ENCODE measurements at regions of chr12 and their contacts with region 1.

Region 1: DNA sequence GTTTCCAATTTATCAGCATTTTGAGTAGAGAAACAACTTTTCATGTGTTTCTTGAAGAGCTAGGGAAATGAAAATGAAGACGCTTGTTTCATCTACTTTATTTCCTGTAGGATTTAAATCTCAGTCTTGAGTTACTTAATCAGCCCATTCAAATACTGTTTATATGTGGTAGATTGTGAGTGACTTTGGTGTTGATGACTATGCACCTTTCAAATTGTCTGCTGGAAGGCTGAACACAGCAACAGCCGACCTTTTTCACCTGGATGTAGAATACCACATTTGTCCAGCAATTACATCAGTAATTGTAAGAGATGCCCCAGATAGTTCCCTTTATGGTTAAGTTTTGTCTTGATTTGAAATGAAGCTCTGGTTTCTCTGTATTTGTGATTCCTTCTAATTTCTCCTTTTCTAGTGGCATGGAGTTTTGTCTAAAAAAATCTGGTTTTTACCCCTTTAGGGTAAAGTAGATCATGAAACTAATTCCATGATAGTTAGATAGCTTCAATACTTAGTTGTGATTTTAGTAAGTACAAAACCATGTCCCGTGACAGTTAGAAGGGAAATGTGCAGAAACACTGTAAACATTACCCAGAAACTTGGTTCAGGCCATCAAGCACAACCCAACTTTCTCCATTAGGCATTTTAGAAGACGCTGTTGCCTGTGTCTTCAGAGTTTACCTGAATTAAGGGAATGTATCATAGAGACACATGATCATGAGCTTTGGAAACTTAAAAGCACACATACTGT is 165.0 kb downstream of the SRGAP1 start:
- DNase-seq: no peak
- ATAC-seq: no peak
- H3K4me3 ChIP-seq: no peak overlapping the region
- H3K27ac ChIP-seq: no peak overlapping the region
- H3K4me1 ChIP-seq: no peaks in the 10 kb centered on the region
- H3K27me3 ChIP-seq: no peaks in the 10 kb centered on the region
- CTCF ChIP-seq: no peak
- POLR2A ChIP-seq: no peak

Region 2: GRCh38 chr12:64042911-64043310 is 33.4 kb after region 1 on chr12:
- in situ Hi-C with region 1: no loop called
- intact Hi-C with region 1: loop called (anchors 1 kb)
- DNase-seq: no peak
- ATAC-seq: no peak
- H3K4me3 ChIP-seq: no peak overlapping the region
- H3K27ac ChIP-seq: no peak overlapping the region
- H3K4me1 ChIP-seq: peaks cover 0 to 7% of the 10 kb centered on the region in 2 donors
- H3K27me3 ChIP-seq: no peaks in the 10 kb centered on the region
- CTCF ChIP-seq: no peak
- POLR2A ChIP-seq: no peak

Region 3: DNA sequence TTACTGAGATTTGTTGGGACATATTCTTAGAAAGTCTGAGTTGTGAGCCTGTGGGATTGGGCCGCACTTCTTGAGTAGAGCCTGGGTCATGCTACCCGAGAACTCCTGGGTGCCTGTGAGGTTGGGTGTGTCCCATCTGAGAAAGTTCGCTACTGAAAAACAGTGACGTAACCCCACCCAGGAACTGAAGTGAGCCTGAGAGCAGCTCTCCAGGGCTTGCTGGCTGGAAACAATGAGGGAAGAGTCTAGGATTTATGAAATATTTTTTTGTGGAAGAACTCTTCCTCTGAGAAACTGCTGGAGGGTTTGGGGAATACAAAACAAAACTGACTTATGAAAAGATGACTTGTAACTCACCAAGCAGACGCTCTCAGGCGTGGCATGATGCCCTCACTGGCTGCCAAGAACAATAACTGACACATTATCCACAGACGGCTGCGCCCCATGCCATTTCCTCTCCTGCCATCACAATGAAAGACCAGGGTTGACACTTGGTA is 670.0 kb after region 1 on chr12:
- in situ Hi-C with region 1: no loop called
- intact Hi-C with region 1: no loop called
- DNase-seq: peak; percentile 25 to 36
- ATAC-seq: peak; percentile 73 to 78
- H3K4me3 ChIP-seq: peak overlapping the region in 3 of 4 donors; percentile 2 to 28 (median 18)
- H3K27ac ChIP-seq: peak overlapping the region; percentile 4 to 15 (median 8)
- H3K4me1 ChIP-seq: peaks cover 6 to 23% of the 10 kb centered on the region in 2 donors
- H3K27me3 ChIP-seq: no peaks in the 10 kb centered on the region
- CTCF ChIP-seq: no peak
- POLR2A ChIP-seq: no peak

Region 4: DNA sequence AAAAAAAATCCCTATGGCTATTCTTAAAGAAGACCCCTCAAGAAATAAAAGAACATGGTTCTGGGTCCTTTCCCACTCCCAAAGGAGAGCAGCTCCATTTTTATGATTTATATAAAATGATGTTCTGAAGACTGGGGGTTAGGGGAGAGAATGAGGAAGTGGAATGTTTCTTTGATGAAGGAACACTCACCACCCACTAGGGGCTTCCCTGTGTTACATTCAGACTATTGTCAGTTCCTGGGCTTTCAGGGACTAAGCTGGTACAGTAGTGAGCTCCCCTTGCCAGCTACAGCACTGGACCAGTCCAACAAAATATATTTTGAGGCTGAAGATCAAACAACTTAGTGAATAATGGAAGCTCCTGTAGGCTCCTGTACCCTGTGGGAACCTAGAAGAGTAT is 1913.7 kb after region 1 on chr12:
- in situ Hi-C with region 1: no loop called
- intact Hi-C with region 1: loop called (anchors 10 kb)
- DNase-seq: no peak
- ATAC-seq: no peak
- H3K4me3 ChIP-seq: no peak overlapping the region
- H3K27ac ChIP-seq: no peak overlapping the region
- H3K4me1 ChIP-seq: no peaks in the 10 kb centered on the region
- H3K27me3 ChIP-seq: no peaks in the 10 kb centered on the region
- CTCF ChIP-seq: no peak
- POLR2A ChIP-seq: no peak